WTC11 (cell line): ENCODE measurements at regions of chr11 and their contacts with region 1.

Region 1: DNA sequence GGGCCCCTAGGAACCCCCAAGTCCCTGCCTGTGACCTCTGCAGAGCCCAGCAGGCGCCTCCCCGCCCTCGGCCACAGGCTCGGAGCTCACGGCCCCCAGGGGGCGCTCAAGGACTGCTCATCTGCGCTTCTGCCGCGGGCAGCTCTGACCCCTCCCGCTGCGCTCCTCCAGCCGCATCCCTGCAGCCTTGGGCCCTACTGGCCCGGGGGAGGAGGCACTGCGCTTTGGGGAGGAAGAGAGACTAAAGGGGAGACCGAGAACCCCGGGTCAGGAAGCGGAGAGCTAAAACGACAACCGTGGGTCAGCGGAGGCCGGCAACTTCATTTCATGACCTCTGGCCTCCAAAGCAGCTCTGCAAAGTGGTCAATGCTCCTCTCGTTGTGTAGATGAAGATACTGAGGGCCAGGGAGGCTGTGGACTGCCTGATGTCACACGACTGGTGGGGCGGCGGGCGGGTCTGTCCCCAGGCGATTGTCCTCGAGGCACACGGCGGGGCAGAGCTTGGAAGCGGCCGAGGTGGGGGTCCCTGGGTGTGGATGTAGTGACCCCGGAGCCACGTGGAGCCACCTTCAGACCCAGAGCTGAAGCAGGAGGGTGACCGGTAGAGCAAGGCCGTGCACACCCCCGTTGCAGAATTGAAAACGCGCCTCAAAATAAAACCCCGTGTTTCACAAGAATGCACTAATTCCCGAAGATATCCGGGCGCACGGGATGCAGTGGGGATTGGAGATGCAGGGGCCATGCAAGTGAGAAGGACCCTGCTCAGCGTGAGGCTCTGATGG is 2.7 kb upstream of the KRTAP5-6 start:
- DNase-seq: peak; percentile 92
- ATAC-seq: peak; percentile 86
- H3K4me3 Mint-ChIP-seq: peak overlapping the region; percentile 35; the same call in 1 of the 2 replicates
- H3K27ac Mint-ChIP-seq: no peak overlapping the region
- H3K4me1 Mint-ChIP-seq: peaks cover 3% of the 10 kb centered on the region
- H3K27me3 Mint-ChIP-seq: peaks cover 22% of the 10 kb centered on the region
- CTCF ChIP-seq: peak; percentile 93

Region 2: GRCh38 chr11:1497600-1497999 is 196.7 kb before region 1 on chr11:
- CTCF ChIA-PET with region 1: no interaction called
- POLR2A ChIA-PET with region 1: no interaction called
- DNase-seq: no peak
- ATAC-seq: no peak
- H3K4me3 Mint-ChIP-seq: no peak overlapping the region
- H3K27ac Mint-ChIP-seq: no peak overlapping the region
- H3K4me1 Mint-ChIP-seq: peaks cover 16% of the 10 kb centered on the region
- H3K27me3 Mint-ChIP-seq: no peaks in the 10 kb centered on the region; the same call in 1 of the 2 replicates
- CTCF ChIP-seq: no peak

Region 3: GRCh38 chr11:1640076-1640946 is 53.9 kb before region 1 on chr11:
- CTCF ChIA-PET with region 1: interaction called, 16 read pairs
- POLR2A ChIA-PET with region 1: no interaction called
- DNase-seq: peak; percentile 74
- ATAC-seq: peak; percentile 94
- H3K4me3 Mint-ChIP-seq: no peak overlapping the region
- H3K27ac Mint-ChIP-seq: no peak overlapping the region
- H3K4me1 Mint-ChIP-seq: peaks cover 3% of the 10 kb centered on the region
- H3K27me3 Mint-ChIP-seq: peaks cover 4% of the 10 kb centered on the region
- CTCF ChIP-seq: peak; percentile 83

Region 4: GRCh38 chr11:1749414-1750312 is 55.4 kb after region 1 on chr11:
- CTCF ChIA-PET with region 1: interaction called, 32 read pairs
- POLR2A ChIA-PET with region 1: no interaction called
- DNase-seq: no peak
- ATAC-seq: peak; percentile 6
- H3K4me3 Mint-ChIP-seq: peak overlapping the region; percentile 57
- H3K27ac Mint-ChIP-seq: no peak overlapping the region
- H3K4me1 Mint-ChIP-seq: peaks cover 12% of the 10 kb centered on the region
- H3K27me3 Mint-ChIP-seq: peaks cover 51% of the 10 kb centered on the region
- CTCF ChIP-seq: no peak

Region 5: GRCh38 chr11:1807264-1807995 is 113.2 kb after region 1 on chr11:
- CTCF ChIA-PET with region 1: interaction called, 21 read pairs
- POLR2A ChIA-PET with region 1: no interaction called
- DNase-seq: no peak
- ATAC-seq: peak; percentile 80
- H3K4me3 Mint-ChIP-seq: no peak overlapping the region
- H3K27ac Mint-ChIP-seq: no peak overlapping the region
- H3K4me1 Mint-ChIP-seq: peaks cover 8% of the 10 kb centered on the region
- H3K27me3 Mint-ChIP-seq: peaks cover 24% of the 10 kb centered on the region
- CTCF ChIP-seq: no peak; the same call in 1 of the 2 replicates

Region 6: GRCh38 chr11:1845561-1846452 is 151.6 kb after region 1 on chr11:
- CTCF ChIA-PET with region 1: interaction called, 15 read pairs
- POLR2A ChIA-PET with region 1: no interaction called
- DNase-seq: no peak
- ATAC-seq: no peak
- H3K4me3 Mint-ChIP-seq: no peak overlapping the region
- H3K27ac Mint-ChIP-seq: no peak overlapping the region
- H3K4me1 Mint-ChIP-seq: no peaks in the 10 kb centered on the region
- H3K27me3 Mint-ChIP-seq: peaks cover 2% of the 10 kb centered on the region; the same call in 1 of the 2 replicates
- CTCF ChIP-seq: no peak

Region 7: DNA sequence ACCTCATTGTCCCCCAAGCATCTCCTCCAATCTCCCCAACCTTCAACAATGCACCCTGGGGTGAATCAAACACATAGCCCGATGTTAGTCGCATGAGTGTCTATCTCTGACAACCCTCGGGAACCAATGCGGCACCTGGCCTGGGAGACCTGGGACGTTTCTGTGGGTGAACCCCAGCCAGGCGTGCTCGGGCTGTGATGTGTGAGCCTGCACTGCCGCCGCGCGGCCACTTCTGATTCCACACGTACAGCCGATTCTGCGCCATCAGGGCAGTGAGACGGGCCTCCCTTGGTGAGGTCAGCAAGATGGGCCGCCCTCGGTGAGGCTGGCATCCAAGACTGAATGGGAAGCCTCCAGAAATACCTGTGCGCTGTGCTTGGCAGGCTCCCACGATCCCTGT is 308.6 kb after region 1 on chr11:
- CTCF ChIA-PET with region 1: interaction called, 38 read pairs
- POLR2A ChIA-PET with region 1: no interaction called
- DNase-seq: no peak
- ATAC-seq: no peak
- H3K4me3 Mint-ChIP-seq: no peak overlapping the region
- H3K27ac Mint-ChIP-seq: no peak overlapping the region
- H3K4me1 Mint-ChIP-seq: no peaks in the 10 kb centered on the region
- H3K27me3 Mint-ChIP-seq: no peaks in the 10 kb centered on the region
- CTCF ChIP-seq: no peak